ENCODE measurements at regions of chr7 and their contacts with region 1.

Region 1: GRCh38 chr7:137454246-137454724 is 110.8 kb upstream of the PTN start:
- DNase-seq: no peak
- H3K4me3 ChIP-seq: peak overlapping the region in 51 of 59 donors; percentile 6 to 60 (median 36)
- H3K27ac ChIP-seq: peak overlapping the region in 53 of 59 donors; percentile 18 to 92 (median 79)
- H3K27me3 ChIP-seq: no peaks in the 10 kb centered on the region
- CTCF ChIP-seq: peak; percentile 60 to 98 (median 84)

Region 2: GRCh38 chr7:137169282-137169698 is 285.0 kb before region 1 on chr7:
- intact Hi-C with region 1: loop called (anchors 2 to 5 kb)
- DNase-seq: peak; percentile 19 to 80 (median 54)
- H3K4me3 ChIP-seq: peak overlapping the region in 13 of 59 donors; percentile 2 to 37 (median 30)
- H3K27ac ChIP-seq: no peak overlapping the region
- H3K27me3 ChIP-seq: no peaks in the 10 kb centered on the region
- CTCF ChIP-seq: peak in 55 of 56 donors; percentile 47 to 92 (median 77)

Region 3: GRCh38 chr7:137287651-137288258 is 166.5 kb before region 1 on chr7:
- intact Hi-C with region 1: loop called in 1 of 2 experiments (anchors 10 kb)
- DNase-seq: no peak
- H3K4me3 ChIP-seq: no peak overlapping the region
- H3K27ac ChIP-seq: peak overlapping the region in 50 of 59 donors; percentile 9 to 85 (median 71)
- H3K27me3 ChIP-seq: no peaks in the 10 kb centered on the region
- CTCF ChIP-seq: peak in 54 of 56 donors; percentile 10 to 69 (median 48)

Region 4: GRCh38 chr7:137313201-137313600 is 141.1 kb before region 1 on chr7:
- intact Hi-C with region 1: loop called in 1 of 2 experiments (anchors 10 kb)
- DNase-seq: peak in 4 of 10 donors; percentile 42 to 54 (median 48)
- H3K4me3 ChIP-seq: peak overlapping the region in 4 of 59 donors; percentile 3 to 21 (median 6)
- H3K27ac ChIP-seq: peak overlapping the region in 54 of 59 donors; percentile 0 to 88 (median 62)
- H3K27me3 ChIP-seq: no peaks in the 10 kb centered on the region
- CTCF ChIP-seq: no peak

Region 5: DNA sequence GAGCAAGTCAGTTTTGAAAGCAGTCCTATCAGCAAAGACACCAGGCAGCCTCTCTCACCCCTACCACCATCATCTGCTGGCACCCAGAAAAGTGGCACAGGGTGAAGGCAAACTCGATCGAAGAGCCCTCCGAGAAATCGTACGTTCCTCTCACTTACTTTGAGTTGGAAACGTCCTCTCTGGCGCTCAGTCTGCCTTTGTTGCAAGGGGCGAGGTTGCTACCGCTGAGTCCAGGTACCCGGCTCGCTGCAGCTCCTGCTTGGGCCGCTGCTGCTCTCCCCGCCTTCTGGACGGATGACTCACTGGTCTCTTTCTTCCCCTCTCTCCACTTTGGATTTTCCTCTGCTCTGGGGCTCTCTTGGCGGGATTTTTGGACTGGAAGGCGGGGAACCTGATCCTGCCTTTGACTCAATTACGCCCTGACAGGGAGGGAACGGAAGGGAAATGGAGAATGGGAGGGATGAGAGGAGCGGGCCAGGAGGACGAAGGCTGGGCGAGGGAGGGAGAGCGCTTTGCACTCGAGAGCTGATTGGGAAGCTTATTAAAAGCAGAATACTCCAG is 110.9 kb before region 1 on chr7 and contains the start of gene PTN:
- intact Hi-C with region 1: loop called (anchors 5 kb)
- DNase-seq: peak; percentile 9 to 63 (median 51)
- H3K4me3 ChIP-seq: peak within 1 kb of the TSS; percentile 41 to 85 (median 69)
- H3K27ac ChIP-seq: peak within 1 kb of the TSS; percentile 26 to 91 (median 80)
- H3K27me3 ChIP-seq: no peaks in the 10 kb centered on the region
- CTCF ChIP-seq: peak in 10 of 56 donors; percentile 11 to 32 (median 20)
- total RNA-seq, gene PTN: 48.1 to 232 (median 85.8) TPM

Region 6: DNA sequence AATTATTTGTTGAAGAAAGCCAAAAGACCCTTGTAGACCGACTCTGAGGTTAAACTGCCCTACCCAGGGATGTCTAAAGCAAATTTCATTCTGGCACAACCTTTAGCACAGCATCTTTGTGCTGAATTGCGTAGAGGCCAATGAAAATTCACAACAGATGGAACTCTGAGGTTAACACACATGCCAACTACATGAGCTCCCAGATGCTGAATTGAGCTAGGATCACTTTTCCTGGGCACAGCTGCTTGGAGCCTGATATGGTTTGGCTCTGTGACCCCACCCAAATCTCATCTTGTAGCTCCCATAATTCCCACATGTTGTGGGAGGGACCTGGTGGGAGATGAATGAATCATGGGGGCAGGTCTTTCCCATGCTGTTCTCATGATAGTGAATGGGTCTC is 47.3 kb after region 1 on chr7:
- intact Hi-C with region 1: no loop called
- DNase-seq: no peak
- H3K4me3 ChIP-seq: no peak overlapping the region
- H3K27ac ChIP-seq: no peak overlapping the region
- H3K27me3 ChIP-seq: no peaks in the 10 kb centered on the region
- CTCF ChIP-seq: no peak

Region 7: DNA sequence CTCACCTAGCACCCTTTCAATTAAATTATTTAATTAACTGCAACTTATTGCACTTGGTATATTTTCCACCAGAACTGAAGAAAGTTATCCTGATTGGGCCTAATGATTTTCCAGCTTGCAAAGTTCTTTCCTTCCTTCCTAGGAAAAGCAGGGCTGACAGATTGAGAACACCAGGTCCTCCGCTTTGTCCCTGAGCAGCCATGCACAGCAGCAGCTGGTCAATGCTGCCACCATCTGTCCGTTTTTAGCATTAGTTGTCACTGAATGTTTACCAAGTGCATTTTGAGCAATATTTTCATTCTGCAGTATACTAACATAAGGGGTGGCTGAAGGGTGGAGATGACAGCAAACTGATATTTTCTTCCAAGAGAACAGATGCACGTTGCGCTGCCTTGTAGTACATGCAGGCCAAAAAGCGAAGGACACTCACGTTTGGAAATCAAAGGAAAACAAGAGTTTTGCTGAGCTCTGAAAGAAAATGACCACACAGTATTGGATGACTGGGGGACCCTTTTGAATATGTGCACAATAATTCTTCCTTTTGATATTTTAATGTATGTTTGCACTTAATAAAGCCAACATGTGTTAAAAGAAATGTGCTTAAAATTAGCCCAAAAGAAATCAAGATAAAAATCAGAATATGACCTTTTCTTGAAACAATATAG is 138.1 kb after region 1 on chr7:
- intact Hi-C with region 1: loop called (anchors 5 to 10 kb)
- DNase-seq: peak in 9 of 10 donors; percentile 57 to 82 (median 64)
- H3K4me3 ChIP-seq: no peak overlapping the region
- H3K27ac ChIP-seq: peak overlapping the region in 7 of 59 donors; percentile 2 to 50 (median 30)
- H3K27me3 ChIP-seq: no peaks in the 10 kb centered on the region
- CTCF ChIP-seq: peak; percentile 54 to 93 (median 79)

Measured in dorsolateral prefrontal cortex (tissue), 120 donors.